ENCODE measurements at regions of chr11 and their contacts with region 1.

Region 1: GRCh38 chr11:95821640-95822039 is 31.3 kb downstream of the CEP57 start:
- DNase-seq: peak in 1 of 2 experiments; percentile 19
- H3K4me3 ChIP-seq: no peak overlapping the region
- H3K27ac ChIP-seq: no peak overlapping the region
- H3K4me1 ChIP-seq: no peaks in the 10 kb centered on the region
- H3K27me3 ChIP-seq: no peaks in the 10 kb centered on the region
- CTCF ChIP-seq: no peak

Region 2: GRCh38 chr11:95850137-95850536 is 28.5 kb after region 1 on chr11:
- CTCF ChIA-PET with region 1: no interaction called
- POLR2A ChIA-PET with region 1: no interaction called
- intact Hi-C with region 1: no loop called
- DNase-seq: no peak
- H3K4me3 ChIP-seq: no peak overlapping the region
- H3K27ac ChIP-seq: peak overlapping the region; percentile 16
- H3K4me1 ChIP-seq: no peaks in the 10 kb centered on the region; the same call in 1 of the 2 replicates
- H3K27me3 ChIP-seq: no peaks in the 10 kb centered on the region
- CTCF ChIP-seq: no peak

Region 3: DNA sequence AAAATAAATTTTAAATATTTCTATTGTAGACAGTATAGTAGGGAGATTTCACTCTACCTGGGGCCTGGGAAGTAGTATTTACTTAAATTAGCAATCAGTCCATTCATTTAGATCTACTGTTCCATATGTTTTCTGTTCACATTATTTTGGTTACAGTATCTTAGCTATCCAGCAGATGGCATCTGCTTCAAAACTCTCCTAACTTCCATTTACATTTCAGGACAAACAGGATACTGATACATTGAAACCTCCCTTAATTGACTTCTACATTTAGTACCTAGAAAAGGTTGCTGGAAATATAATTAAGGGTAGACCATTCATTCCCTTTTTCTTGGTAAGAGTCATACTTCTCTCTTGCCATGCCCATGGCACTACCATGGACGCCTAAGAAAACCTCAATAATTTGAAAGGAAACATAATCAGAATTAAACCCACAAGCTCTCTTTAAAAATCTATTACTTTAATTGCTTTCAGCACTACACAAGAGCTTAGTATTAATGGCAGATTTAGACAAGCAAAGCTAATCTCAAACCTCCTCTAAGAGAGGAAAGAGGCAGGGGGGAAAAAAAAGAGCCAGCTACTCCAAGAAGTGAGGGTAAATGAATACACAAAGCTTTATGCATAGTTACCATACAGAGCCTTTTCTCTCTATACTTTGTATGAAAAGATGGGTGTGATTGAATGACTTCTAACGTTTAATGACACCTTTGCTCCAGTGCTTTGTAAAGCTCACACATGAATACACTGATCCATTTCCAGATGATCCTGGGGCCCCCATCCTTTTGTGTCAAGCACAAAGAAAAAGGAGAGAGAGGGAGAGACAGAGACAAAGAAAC is 233.4 kb after region 1 on chr11:
- CTCF ChIA-PET with region 1: no interaction called
- POLR2A ChIA-PET with region 1: interaction called, 28 read pairs
- intact Hi-C with region 1: no loop called
- DNase-seq: peak in 1 of 2 experiments; percentile 50
- H3K4me3 ChIP-seq: no peak overlapping the region
- H3K27ac ChIP-seq: peak overlapping the region; percentile 47
- H3K4me1 ChIP-seq: peaks cover 64% of the 10 kb centered on the region
- H3K27me3 ChIP-seq: no peaks in the 10 kb centered on the region
- CTCF ChIP-seq: peak; percentile 79

Measured in PC-9 (cell line).